H1 (cell line): ENCODE measurements at regions of chrX and their contacts with region 1.

Region 1: GRCh38 chrX:71181910-71182799 is 37.5 kb downstream of the NLGN3 start:
- DNase-seq: peak; percentile 69 to 74
- H3K4me3 ChIP-seq: peak overlapping the region; percentile 41 to 64 (median 45); a peak in 7 of 8 replicates
- H3K27ac ChIP-seq: peak overlapping the region; percentile 90
- H3K4me1 ChIP-seq: peaks cover 3 to 7% (median 5%) of the 10 kb centered on the region in 4 experiments; a peak in 4 of 7 replicates
- H3K27me3 ChIP-seq: no peaks in the 10 kb centered on the region
- CTCF ChIP-seq: no peak
- EP300 ChIP-seq: no peak
- POLR2A ChIP-seq: peak; percentile 83 to 96
- RAD21 ChIP-seq: no peak

Region 2: GRCh38 chrX:71118032-71118984 is 63.8 kb before region 1 on chrX and contains the start of gene MED12:
- CTCF ChIA-PET with region 1: no interaction called
- POLR2A ChIA-PET with region 1: interaction called, 12 read pairs
- DNase-seq: peak in 1 of 2 experiments; percentile 86
- H3K4me3 ChIP-seq: peak within 1 kb of the TSS; percentile 43 to 84 (median 55)
- H3K27ac ChIP-seq: no peak within 1 kb of the TSS; the same call in 1 of the 2 replicates
- H3K4me1 ChIP-seq: peaks cover 0 to 6% (median 2%) of the 10 kb centered on the region in 4 experiments; a peak in 3 of 7 replicates
- H3K27me3 ChIP-seq: peaks cover 0 to 3% (median 0%) of the 10 kb centered on the region in 4 experiments; a peak in 1 of 7 replicates
- CTCF ChIP-seq: no peak
- EP300 ChIP-seq: no peak
- POLR2A ChIP-seq: no peak; a peak in 1 of 3 replicates
- RAD21 ChIP-seq: peak; percentile 1 to 10; a peak in 1 of 4 replicates
- total RNA-seq, gene MED12: 43.5 and 48.9 TPM in 2 replicates

Region 3: GRCh38 chrX:71171110-71171801 is 10.9 kb before region 1 on chrX:
- CTCF ChIA-PET with region 1: interaction called, 3 read pairs
- POLR2A ChIA-PET with region 1: interaction called, 11 read pairs
- DNase-seq: no peak
- H3K4me3 ChIP-seq: no peak overlapping the region; a peak in 1 of 8 replicates
- H3K27ac ChIP-seq: no peak overlapping the region; the same call in 1 of the 2 replicates
- H3K4me1 ChIP-seq: peaks cover 0 to 4% (median 3%) of the 10 kb centered on the region in 4 experiments; a peak in 4 of 7 replicates
- H3K27me3 ChIP-seq: no peaks in the 10 kb centered on the region
- CTCF ChIP-seq: no peak
- EP300 ChIP-seq: no peak
- POLR2A ChIP-seq: no peak
- RAD21 ChIP-seq: no peak

Region 4: DNA sequence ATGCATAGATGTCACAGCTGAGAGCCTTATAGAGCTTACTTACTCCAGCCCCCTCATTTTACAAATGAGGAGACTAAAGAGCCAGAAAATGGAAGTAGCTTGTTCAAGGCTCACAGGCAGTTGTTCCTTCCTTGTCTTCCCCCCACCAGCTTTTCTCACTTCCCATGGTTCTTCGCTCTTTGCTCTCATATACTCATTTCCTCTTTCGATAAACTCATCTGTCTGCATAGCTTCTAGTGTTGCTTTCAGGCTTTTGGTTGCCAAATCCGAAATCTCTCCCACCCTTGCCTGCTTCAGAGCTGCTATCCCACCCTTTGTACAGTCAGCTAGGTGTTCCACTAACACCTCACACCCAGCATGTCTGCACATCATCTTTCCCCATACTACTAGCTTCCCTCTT is 15.9 kb after region 1 on chrX:
- CTCF ChIA-PET with region 1: no interaction called
- POLR2A ChIA-PET with region 1: interaction called, 13 read pairs
- DNase-seq: no peak
- H3K4me3 ChIP-seq: no peak overlapping the region
- H3K27ac ChIP-seq: no peak overlapping the region
- H3K4me1 ChIP-seq: peaks cover 0 to 4% (median 0%) of the 10 kb centered on the region in 4 experiments; a peak in 2 of 7 replicates
- H3K27me3 ChIP-seq: no peaks in the 10 kb centered on the region
- CTCF ChIP-seq: no peak
- EP300 ChIP-seq: no peak
- POLR2A ChIP-seq: no peak
- RAD21 ChIP-seq: no peak

Region 5: DNA sequence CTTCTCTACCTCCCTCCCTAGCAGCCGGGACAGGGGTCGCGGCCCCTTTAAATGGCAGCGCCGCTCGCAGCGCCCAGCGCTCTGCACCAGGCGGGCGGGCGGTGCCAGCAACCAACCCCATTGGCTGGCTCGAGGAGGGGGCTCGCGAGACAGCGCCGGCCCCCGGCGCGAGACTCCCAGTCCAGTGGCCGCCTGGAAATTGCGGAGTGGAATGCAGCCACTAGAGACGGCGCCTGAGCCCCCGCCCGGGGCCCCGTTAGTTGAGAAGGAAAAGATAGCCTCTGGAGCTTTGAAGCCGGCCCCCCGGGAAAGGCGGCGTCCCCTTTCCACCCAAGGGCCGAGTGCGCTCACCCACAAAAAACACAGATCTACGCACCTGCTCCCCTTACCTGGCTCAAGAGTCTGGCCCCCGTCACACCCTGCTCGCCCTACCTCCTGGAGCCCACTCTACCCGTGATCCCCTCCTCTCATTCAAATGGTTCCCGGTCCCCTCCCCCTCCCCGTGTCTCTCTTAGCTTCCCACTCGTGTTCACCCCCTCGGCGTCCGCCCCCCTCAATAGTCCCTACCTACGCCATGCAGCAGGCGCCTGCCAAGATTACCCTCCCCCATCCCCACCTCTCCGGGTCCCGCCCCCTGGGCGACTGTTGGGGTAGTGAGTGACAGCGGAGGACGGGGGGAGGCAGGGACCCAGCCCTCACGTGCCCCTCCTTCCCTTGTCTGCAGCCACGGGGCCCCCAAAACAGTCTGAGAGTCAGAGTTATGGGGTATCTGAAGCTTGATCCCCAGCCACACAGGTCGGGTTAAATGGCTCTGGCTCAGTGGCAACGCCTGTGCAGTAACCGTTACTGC is 72.2 kb after region 1 on chrX and contains the start of gene ZMYM3:
- CTCF ChIA-PET with region 1: no interaction called
- POLR2A ChIA-PET with region 1: interaction called, 11 read pairs
- DNase-seq: peak in 1 of 2 experiments; percentile 61
- H3K4me3 ChIP-seq: peak within 1 kb of the TSS; percentile 79 to 99 (median 82)
- H3K27ac ChIP-seq: peak within 1 kb of the TSS; percentile 75; the same call in 1 of the 2 replicates
- H3K4me1 ChIP-seq: peaks cover 0 to 5% (median 3%) of the 10 kb centered on the region in 4 experiments; a peak in 4 of 7 replicates
- H3K27me3 ChIP-seq: no peaks in the 10 kb centered on the region
- CTCF ChIP-seq: no peak
- EP300 ChIP-seq: no peak
- POLR2A ChIP-seq: no peak
- RAD21 ChIP-seq: no peak
- total RNA-seq, gene ZMYM3: 82.0 and 86.4 TPM in 2 replicates

Region 6: DNA sequence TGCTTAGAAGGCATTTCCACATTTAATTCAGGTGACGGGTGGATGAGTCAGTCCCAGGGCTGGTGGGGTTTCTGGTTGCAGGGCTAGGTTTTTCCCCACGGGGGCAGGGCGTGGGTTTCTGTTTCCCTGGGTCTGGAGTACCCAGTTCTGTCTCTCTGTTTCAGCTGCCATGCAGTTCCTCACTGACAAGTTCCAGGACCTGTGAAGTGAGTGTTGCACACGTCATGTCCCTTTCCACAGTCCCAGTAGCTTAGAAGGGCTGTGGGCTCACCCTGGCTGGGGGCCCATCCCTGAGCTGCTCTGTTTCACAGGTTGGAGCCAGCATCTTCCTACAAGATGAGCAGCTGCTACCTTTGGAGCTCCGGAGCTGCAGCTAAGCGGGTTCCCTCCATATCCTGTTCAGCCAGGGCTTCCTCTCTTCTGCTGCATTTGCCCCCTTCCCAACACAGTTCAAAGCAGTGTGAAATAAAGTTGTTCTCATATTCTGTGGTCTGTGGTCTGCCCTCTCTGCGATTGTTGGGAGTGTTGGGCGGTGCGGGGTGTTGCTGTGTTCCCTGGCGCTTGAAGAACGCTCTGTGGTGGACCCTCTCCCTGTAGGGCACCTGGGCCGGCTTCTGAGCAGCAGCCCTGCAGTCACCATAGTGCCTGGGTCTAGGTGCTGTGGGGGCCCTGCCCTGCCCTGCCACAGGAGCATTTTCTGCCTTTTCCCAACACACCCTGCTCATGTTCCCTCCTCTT is 489.1 kb after region 1 on chrX:
- CTCF ChIA-PET with region 1: no interaction called
- POLR2A ChIA-PET with region 1: no interaction called
- DNase-seq: no peak
- H3K4me3 ChIP-seq: no peak overlapping the region
- H3K27ac ChIP-seq: no peak overlapping the region
- H3K4me1 ChIP-seq: no peaks in the 10 kb centered on the region
- H3K27me3 ChIP-seq: no peaks in the 10 kb centered on the region
- CTCF ChIP-seq: no peak
- EP300 ChIP-seq: no peak
- POLR2A ChIP-seq: no peak
- RAD21 ChIP-seq: no peak